ENCODE measurements at regions of chr1 and their contacts with region 1.

Region 1: GRCh38 chr1:226121587-226122400 is 59.3 kb downstream of the H3-3A start:
- DNase-seq: peak; percentile 78
- H3K4me3 Mint-ChIP-seq: peak overlapping the region; percentile 74
- H3K27ac Mint-ChIP-seq: peak overlapping the region; percentile 74
- H3K4me1 Mint-ChIP-seq: peaks cover 26% of the 10 kb centered on the region
- H3K27me3 Mint-ChIP-seq: no peaks in the 10 kb centered on the region

Region 2: DNA sequence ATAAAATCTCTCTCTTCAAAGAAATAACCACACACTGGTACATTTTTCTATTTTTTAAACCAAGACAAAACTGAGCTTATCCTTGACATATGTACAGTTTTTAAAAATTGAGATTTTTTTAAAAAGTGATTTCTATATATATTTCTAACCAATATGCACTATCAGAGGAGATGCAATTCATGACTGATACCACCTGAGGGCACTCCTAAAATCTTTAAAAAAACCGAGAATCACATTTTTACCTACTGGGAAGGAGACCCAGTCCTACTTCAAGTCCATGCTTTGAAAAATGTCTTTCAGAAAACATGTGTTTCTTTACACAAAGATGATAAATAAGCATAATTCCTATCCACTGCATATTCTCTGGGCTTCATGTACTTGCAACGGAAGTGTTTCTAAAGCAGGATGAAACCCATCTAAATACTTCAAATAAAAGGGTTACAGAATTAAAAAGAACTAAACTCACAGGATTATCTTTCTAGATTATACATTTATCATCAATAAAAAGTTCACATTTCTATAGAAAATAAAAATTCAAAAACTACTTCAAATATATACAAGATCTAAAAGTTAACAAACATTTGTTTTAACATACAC is 567.5 kb before region 1 on chr1:
- CTCF ChIA-PET with region 1: no interaction called
- POLR2A ChIA-PET with region 1: no interaction called
- intact Hi-C with region 1: no loop called
- DNase-seq: no peak
- H3K4me3 Mint-ChIP-seq: no peak overlapping the region
- H3K27ac Mint-ChIP-seq: no peak overlapping the region
- H3K4me1 Mint-ChIP-seq: no peaks in the 10 kb centered on the region
- H3K27me3 Mint-ChIP-seq: peaks cover 3% of the 10 kb centered on the region

Region 3: GRCh38 chr1:225999227-225999911 is 122.4 kb before region 1 on chr1 and contains the start of gene SDE2:
- CTCF ChIA-PET with region 1: interaction called, 3 read pairs
- POLR2A ChIA-PET with region 1: interaction called, 4 read pairs
- intact Hi-C with region 1: loop called (anchors 1 kb)
- DNase-seq: peak; percentile 100
- H3K4me3 Mint-ChIP-seq: peak within 1 kb of the TSS; percentile 100
- H3K27ac Mint-ChIP-seq: peak within 1 kb of the TSS; percentile 96
- H3K4me1 Mint-ChIP-seq: peaks cover 66% of the 10 kb centered on the region
- H3K27me3 Mint-ChIP-seq: no peaks in the 10 kb centered on the region
- total RNA-seq, gene SDE2: 18.0 to 18.2 TPM

Region 4: DNA sequence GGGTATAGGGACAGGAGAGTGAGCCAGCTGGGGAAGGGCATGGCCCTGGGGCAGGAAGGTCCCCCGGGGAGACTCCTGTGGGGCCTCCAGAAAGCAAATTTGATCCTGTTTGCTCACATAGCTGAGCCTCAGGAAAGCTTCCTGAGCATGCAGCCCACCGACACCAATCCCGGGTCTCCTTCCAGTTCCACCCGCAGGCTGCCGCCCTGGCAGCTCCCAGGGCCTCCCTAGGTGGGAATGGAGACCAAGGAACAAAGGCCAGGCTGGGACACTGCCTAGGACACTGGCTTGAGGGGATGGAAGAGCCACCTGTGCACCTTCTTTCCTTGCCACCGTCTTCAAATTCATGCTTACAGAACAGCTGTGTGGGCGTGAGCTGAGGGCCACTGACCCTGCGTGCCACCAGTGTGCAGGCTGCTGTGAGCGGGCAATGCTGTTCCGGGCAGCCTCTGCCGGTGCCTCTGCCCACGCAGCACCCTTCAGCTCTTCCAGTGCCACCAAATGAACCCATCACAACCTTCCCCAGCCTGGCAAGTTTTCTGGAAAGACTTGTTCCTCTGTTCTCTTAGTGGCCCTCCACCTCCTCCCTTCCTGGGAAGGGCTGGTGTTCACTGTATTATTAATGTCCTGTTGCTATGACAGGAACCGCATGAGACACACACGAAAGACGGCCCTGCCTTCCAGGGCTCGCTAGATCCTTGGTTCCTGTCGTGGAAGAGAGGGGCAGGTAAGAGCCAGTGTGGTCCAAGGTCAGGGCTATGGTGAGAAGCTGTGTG is 11.1 kb after region 1 on chr1:
- CTCF ChIA-PET with region 1: interaction called, 10 read pairs
- POLR2A ChIA-PET with region 1: no interaction called
- intact Hi-C with region 1: no loop called
- DNase-seq: no peak
- H3K4me3 Mint-ChIP-seq: no peak overlapping the region
- H3K27ac Mint-ChIP-seq: no peak overlapping the region
- H3K4me1 Mint-ChIP-seq: peaks cover 3% of the 10 kb centered on the region
- H3K27me3 Mint-ChIP-seq: no peaks in the 10 kb centered on the region

Region 5: GRCh38 chr1:226186124-226187018 is 64.6 kb after region 1 on chr1 and contains the start of gene ACBD3:
- CTCF ChIA-PET with region 1: interaction called, 17 read pairs
- POLR2A ChIA-PET with region 1: no interaction called
- intact Hi-C with region 1: loop called (anchors 2 kb)
- DNase-seq: peak; percentile 91
- H3K4me3 Mint-ChIP-seq: peak within 1 kb of the TSS; percentile 93
- H3K27ac Mint-ChIP-seq: peak within 1 kb of the TSS; percentile 91
- H3K4me1 Mint-ChIP-seq: peaks cover 34% of the 10 kb centered on the region
- H3K27me3 Mint-ChIP-seq: no peaks in the 10 kb centered on the region
- total RNA-seq, gene ACBD3: 18.7 to 20.7 TPM

Region 6: GRCh38 chr1:226332947-226333346 is 211.2 kb after region 1 on chr1:
- CTCF ChIA-PET with region 1: interaction called, 39 read pairs
- POLR2A ChIA-PET with region 1: interaction called, 3 read pairs
- intact Hi-C with region 1: loop called (anchors 1 kb)
- DNase-seq: no peak
- H3K4me3 Mint-ChIP-seq: no peak overlapping the region
- H3K27ac Mint-ChIP-seq: no peak overlapping the region
- H3K4me1 Mint-ChIP-seq: peaks cover 15% of the 10 kb centered on the region
- H3K27me3 Mint-ChIP-seq: no peaks in the 10 kb centered on the region